ENCODE measurements at regions of chr3 and their contacts with region 1.

Region 1: GRCh38 chr3:69948246-69948862 is 51.2 kb upstream of the SAMMSON start:
- ATAC-seq: peak in 1 of 8 experiments; percentile 34
- H3K4me3 ChIP-seq: no peak overlapping the region
- H3K27ac ChIP-seq: no peak overlapping the region
- H3K4me1 ChIP-seq: peaks cover 0 to 5% of the 10 kb centered on the region in 2 donors

Region 2: GRCh38 chr3:69691860-69692259 is 256.5 kb before region 1 on chr3:
- in situ Hi-C with region 1: loop called in 3 of 9 experiments (anchors 10 to 25 kb)
- ATAC-seq: no peak
- H3K4me3 ChIP-seq: no peak overlapping the region
- H3K27ac ChIP-seq: no peak overlapping the region
- H3K4me1 ChIP-seq: no peaks in the 10 kb centered on the region

Region 3: GRCh38 chr3:69710153-69710977 is 238.0 kb before region 1 on chr3:
- in situ Hi-C with region 1: loop called in 1 of 9 experiments (anchors 25 kb)
- ATAC-seq: no peak
- H3K4me3 ChIP-seq: no peak overlapping the region
- H3K27ac ChIP-seq: no peak overlapping the region
- H3K4me1 ChIP-seq: no peaks in the 10 kb centered on the region

Region 4: DNA sequence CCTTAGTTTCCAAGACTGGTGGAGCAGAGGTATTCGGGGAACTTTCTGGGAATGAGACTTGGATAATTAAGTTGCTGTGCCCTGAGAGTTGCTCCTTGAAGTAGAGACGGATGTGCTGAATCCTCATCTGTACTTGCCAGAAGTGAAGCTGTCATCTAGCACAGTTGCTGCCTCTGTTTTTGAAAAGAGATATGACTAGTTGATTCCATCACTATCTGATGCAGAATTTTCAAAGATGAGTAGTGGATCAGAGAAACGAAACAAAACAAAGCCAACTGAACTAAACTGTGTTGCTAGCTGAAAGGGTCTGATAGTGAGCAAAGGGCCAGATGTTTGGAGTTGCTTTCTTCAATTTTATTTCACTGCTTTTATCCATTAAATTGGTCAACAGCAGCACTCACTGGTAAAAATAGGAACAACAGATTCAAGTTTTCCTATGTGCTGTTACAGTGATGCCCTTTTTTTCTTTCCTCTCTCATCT is 156.4 kb before region 1 on chr3:
- in situ Hi-C with region 1: loop called in 1 of 9 experiments (anchors 10 kb)
- ATAC-seq: peak in 3 of 8 experiments; percentile 53 to 83 (median 55)
- H3K4me3 ChIP-seq: no peak overlapping the region
- H3K27ac ChIP-seq: no peak overlapping the region
- H3K4me1 ChIP-seq: no peaks in the 10 kb centered on the region

Region 5: GRCh38 chr3:69819282-69819681 is 129.1 kb before region 1 on chr3:
- in situ Hi-C with region 1: no loop called
- ATAC-seq: no peak
- H3K4me3 ChIP-seq: no peak overlapping the region
- H3K27ac ChIP-seq: no peak overlapping the region
- H3K4me1 ChIP-seq: peaks cover 0 to 9% of the 10 kb centered on the region in 2 donors

Region 6: DNA sequence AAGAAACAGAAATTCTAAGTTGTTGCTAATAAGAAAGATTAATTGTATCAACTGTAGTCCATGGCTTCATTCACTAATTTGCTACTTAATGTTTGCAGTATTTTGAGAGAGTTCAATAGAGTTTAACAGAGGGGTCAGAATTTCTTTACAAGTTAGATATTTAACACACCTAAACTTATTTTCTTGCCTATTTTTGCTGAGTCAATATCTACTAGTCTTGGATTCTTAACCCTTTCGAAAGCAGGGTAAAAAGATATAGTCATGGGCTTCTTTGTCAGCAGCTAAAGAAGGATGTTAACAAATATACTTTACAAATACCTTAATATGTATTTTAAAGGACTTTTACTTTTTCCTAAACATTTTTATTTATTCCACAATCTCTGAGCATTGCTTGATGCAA is 208.5 kb after region 1 on chr3:
- in situ Hi-C with region 1: no loop called
- ATAC-seq: no peak
- H3K4me3 ChIP-seq: no peak overlapping the region
- H3K27ac ChIP-seq: no peak overlapping the region
- H3K4me1 ChIP-seq: peaks cover 0 to 10% of the 10 kb centered on the region in 2 donors